CD8-positive, alpha-beta T cell (primary cell): ENCODE measurements at regions of chr1 and their contacts with region 1.

Region 1: GRCh38 chr1:64176659-64177058 is 26.8 kb upstream of the UBE2U start:
- DNase-seq: no peak
- ATAC-seq: no peak
- H3K4me3 ChIP-seq: no peak overlapping the region
- H3K4me3 Mint-ChIP-seq: no peak overlapping the region
- H3K27ac ChIP-seq: no peak overlapping the region
- H3K27ac Mint-ChIP-seq: no peak overlapping the region
- H3K4me1 ChIP-seq: no peaks in the 10 kb centered on the region
- H3K4me1 Mint-ChIP-seq: no peaks in the 10 kb centered on the region
- H3K27me3 ChIP-seq: no peaks in the 10 kb centered on the region
- H3K27me3 Mint-ChIP-seq: peaks cover 2% of the 10 kb centered on the region
- CTCF ChIP-seq: no peak

Region 2: GRCh38 chr1:63991685-63992084 is 185.0 kb before region 1 on chr1:
- CTCF ChIA-PET with region 1: no interaction called
- POLR2A ChIA-PET with region 1: no interaction called
- intact Hi-C with region 1: loop called in 1 of 2 experiments (anchors 5 kb)
- DNase-seq: no peak
- ATAC-seq: no peak
- H3K4me3 ChIP-seq: no peak overlapping the region
- H3K4me3 Mint-ChIP-seq: no peak overlapping the region
- H3K27ac ChIP-seq: no peak overlapping the region
- H3K27ac Mint-ChIP-seq: no peak overlapping the region
- H3K4me1 ChIP-seq: no peaks in the 10 kb centered on the region
- H3K4me1 Mint-ChIP-seq: no peaks in the 10 kb centered on the region
- H3K27me3 ChIP-seq: no peaks in the 10 kb centered on the region
- H3K27me3 Mint-ChIP-seq: no peaks in the 10 kb centered on the region
- CTCF ChIP-seq: no peak

Region 3: DNA sequence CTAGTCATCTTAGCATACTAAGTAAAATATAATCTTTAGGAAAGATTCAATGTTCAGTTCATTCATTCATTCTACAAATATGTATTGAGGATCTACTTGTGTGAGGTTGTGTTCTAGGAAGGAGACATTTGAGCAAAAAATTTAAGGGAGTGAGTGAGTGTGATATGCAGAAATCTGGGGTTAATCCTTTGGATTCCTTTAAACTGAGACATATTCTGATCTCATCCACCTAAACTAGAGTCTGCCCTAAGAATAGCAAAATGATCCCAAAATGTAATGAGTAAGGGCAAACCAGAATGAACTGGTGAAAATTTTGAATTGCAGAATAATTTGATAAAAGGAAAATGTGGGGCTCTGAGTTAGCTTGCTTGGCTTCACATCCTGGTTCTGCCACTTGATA is 35.4 kb after region 1 on chr1:
- CTCF ChIA-PET with region 1: no interaction called
- POLR2A ChIA-PET with region 1: no interaction called
- intact Hi-C with region 1: no loop called
- DNase-seq: no peak
- ATAC-seq: no peak
- H3K4me3 ChIP-seq: no peak overlapping the region
- H3K4me3 Mint-ChIP-seq: no peak overlapping the region
- H3K27ac ChIP-seq: no peak overlapping the region
- H3K27ac Mint-ChIP-seq: no peak overlapping the region
- H3K4me1 ChIP-seq: no peaks in the 10 kb centered on the region
- H3K4me1 Mint-ChIP-seq: no peaks in the 10 kb centered on the region
- H3K27me3 ChIP-seq: peaks cover 0 to 4% of the 10 kb centered on the region in 2 experiments
- H3K27me3 Mint-ChIP-seq: peaks cover 8% of the 10 kb centered on the region
- CTCF ChIP-seq: no peak